ENCODE measurements at regions of chr7 and their contacts with region 1.

Region 1: DNA sequence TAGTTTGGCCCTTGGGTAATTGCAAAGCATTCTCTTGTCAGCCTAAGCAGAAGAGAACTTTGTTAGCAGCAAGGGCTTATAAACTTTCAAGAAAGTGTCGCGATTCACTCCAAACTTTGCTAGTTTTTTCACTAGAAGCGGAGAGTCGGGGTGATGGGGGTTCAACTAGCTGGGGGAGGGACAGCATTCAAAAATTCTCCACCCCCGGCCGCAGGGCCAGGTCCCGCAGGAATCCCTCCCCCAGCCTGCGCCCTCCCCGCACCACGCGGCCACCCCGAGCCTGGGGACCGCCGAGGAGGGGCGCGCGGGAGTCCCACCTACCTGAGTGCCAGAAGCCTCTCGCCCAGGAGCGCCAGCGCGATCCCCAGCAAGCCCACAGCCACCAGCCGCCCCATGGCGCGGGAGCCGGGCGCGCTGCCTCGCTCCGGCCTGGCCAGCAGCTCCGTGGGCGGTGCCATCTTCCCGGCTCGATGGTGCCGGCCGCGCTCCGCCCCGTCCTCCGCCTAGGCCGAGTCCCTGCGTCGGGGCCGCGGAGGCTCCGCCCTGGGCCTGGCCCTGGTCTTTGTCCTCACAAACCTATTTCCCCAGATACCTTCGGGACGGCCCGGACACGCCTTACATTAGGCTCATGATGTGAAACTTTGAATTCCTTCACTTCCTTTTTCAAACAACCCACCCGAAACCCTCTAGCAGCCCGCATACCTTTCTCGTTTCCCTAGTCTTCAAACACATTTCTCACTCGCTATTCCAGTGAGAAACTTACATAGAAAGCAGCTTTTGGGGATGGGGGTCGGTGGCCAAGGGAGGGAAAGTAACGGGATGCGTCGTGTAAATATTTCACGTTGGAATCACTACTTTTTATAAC is at the start of gene PON2:
- H3K4me3 Mint-ChIP-seq: peak within 1 kb of the TSS; percentile 73
- H3K27ac Mint-ChIP-seq: peak within 1 kb of the TSS; percentile 75
- H3K4me1 Mint-ChIP-seq: peaks cover 22% of the 10 kb centered on the region
- H3K27me3 Mint-ChIP-seq: peaks cover 1% of the 10 kb centered on the region

Region 2: DNA sequence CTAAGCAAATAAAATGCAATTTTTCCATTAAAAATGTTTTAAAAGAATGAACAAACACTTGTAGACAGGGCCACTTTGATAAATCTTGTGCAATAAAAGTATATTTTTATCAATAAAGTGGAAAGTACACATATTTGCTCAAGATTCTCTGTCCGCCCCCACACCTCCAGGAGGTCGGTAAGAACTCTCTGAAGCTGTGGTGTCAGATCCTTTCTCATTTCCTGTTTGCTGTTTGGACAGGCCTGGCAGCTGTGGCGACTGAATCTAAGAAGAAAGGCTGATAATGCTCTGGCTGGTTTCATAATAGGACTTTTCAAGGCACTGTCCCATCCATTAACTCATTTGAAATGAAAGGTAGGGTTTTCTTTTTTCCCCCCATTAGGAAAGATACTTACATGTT is 35.7 kb after region 1 on chr7:
- intact Hi-C with region 1: loop called (anchors 5 kb)
- H3K4me3 Mint-ChIP-seq: no peak overlapping the region
- H3K27ac Mint-ChIP-seq: peak overlapping the region; percentile 69
- H3K4me1 Mint-ChIP-seq: peaks cover 10% of the 10 kb centered on the region
- H3K27me3 Mint-ChIP-seq: peaks cover 3% of the 10 kb centered on the region

Region 3: DNA sequence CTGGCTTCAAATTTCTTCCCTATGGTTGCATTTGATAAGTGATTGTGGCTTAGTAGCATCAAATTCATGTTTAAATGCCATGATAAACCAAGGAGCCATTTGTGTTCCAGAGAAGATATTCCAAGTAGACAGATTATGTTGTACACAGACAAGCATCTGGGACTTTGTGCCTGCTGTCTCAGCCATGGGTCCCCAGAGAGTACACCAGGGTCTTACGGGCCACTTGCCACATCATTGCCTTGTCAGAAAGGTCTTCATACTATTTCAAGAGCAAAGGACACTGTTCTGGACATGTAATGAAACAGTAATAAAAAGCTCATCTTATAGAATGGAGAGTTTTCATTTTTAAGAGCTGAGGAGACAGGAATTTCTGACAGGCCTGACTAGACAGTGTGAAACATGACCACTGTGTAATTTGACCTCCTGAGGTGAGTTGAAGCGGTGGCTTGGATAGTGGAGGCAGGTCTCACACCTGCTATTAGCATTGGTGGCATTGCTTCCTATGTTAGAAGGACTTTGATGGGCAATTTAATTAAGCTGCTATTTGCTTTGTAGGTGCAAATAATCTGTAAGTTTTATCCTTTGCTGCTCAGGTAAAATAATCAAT is 46.9 kb after region 1 on chr7:
- intact Hi-C with region 1: no loop called
- H3K4me3 Mint-ChIP-seq: no peak overlapping the region
- H3K27ac Mint-ChIP-seq: no peak overlapping the region
- H3K4me1 Mint-ChIP-seq: no peaks in the 10 kb centered on the region
- H3K27me3 Mint-ChIP-seq: peaks cover 6% of the 10 kb centered on the region